ENCODE measurements at regions of chr10 and their contacts with region 1.

Region 1: DNA sequence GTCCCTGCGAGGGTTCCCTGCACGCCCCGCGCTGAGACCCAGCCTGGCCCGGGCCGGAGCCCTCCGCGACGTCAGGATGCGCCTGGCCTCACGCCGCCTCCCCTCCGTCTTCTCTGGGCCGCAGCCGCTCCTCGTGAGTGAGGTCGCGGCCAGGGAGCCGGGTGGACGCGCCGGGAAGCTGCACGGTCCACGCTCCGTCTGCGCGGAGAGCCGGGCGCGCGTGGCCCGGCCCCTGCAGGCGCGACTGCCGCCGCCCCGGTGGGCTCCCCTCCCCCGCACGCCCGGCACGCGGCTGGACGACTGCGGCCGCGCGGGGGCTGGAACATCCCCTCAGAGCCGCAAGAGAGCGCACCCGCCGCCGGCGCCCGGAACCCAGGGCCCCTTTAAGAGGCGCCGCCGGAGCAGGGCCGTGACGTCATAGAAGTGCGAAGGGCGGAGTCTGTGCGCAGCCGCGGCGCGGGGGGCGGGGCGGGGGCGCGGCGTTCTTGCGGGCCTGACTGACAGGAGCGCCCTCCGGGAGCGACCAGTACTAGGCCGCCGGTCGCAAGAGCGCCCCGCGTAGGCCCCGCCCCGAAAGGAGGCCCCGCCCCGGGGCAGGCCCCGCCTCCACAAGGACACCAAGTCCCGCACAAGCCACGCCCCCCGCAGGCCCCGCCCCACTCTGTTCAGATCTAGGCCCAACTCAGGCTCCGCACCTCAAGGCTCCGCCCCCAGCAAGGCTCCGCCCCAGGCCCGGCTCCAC is 445 bp upstream of the INPP5A start:
- DNase-seq: peak; percentile 100
- ATAC-seq: peak; percentile 89
- H3K4me3 Mint-ChIP-seq: peak overlapping the region; percentile 64
- H3K27ac Mint-ChIP-seq: no peak overlapping the region
- H3K4me1 Mint-ChIP-seq: peaks cover 52% of the 10 kb centered on the region
- H3K27me3 Mint-ChIP-seq: no peaks in the 10 kb centered on the region
- CTCF ChIP-seq: no peak

Region 2: GRCh38 chr10:132331526-132332432 is 205.4 kb before region 1 on chr10 and contains the start of gene LRRC27:
- CTCF ChIA-PET with region 1: no interaction called
- POLR2A ChIA-PET with region 1: no interaction called
- intact Hi-C with region 1: loop called (anchors 1 kb)
- DNase-seq: peak; percentile 100
- ATAC-seq: peak; percentile 80
- H3K4me3 Mint-ChIP-seq: peak within 1 kb of the TSS; percentile 94
- H3K27ac Mint-ChIP-seq: peak within 1 kb of the TSS; percentile 98
- H3K4me1 Mint-ChIP-seq: peaks cover 81% of the 10 kb centered on the region
- H3K27me3 Mint-ChIP-seq: no peaks in the 10 kb centered on the region
- CTCF ChIP-seq: no peak
- total RNA-seq, gene LRRC27: 9.1 and 15.2 TPM in 2 replicates

Region 3: GRCh38 chr10:132452631-132453469 is 84.3 kb before region 1 on chr10:
- CTCF ChIA-PET with region 1: no interaction called
- POLR2A ChIA-PET with region 1: interaction called, 3 read pairs
- intact Hi-C with region 1: loop called (anchors 2 kb)
- DNase-seq: peak; percentile 95
- ATAC-seq: peak; percentile 90
- H3K4me3 Mint-ChIP-seq: peak overlapping the region; percentile 38
- H3K27ac Mint-ChIP-seq: peak overlapping the region; percentile 77
- H3K4me1 Mint-ChIP-seq: peaks cover 24% of the 10 kb centered on the region
- H3K27me3 Mint-ChIP-seq: no peaks in the 10 kb centered on the region
- CTCF ChIP-seq: peak; percentile 66

Region 4: DNA sequence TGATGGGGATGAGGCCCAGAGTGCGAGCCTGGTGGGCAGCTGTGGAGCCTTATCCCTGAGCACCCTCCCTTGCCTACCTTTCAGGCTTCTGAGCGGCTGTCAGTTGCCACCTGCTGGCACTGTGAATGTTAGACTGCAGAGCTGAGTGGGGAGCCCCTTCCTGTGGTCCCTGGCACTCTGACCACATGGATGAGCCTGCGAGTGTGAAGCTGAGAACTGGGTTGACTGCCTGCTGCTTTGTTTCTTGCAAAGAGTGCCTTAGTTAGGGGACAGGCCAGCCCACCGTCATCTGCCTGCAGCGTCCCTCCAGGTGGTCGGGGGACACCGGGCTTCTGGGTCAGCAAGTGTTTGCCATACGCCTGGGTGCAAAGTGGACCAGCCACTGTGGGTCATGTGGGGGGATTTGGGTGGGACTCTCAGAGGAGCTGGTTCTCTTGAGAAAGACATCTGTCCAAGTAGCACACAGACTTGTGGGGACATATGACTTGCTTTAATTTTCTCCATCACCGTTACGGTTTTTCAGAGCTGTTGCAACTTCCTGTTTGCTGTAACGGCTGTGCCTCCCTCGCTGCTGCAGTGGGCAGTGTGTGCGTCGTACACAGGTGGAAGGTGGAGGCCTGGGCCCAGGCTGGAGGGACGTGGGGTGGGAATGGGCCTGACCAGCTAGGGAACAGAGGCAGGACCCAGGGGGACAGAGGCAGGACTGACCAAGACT is 14.1 kb after region 1 on chr10:
- CTCF ChIA-PET with region 1: interaction called, 11 read pairs
- POLR2A ChIA-PET with region 1: interaction called, 18 read pairs
- intact Hi-C with region 1: loop called (anchors 1 kb)
- DNase-seq: no peak
- ATAC-seq: peak; percentile 32
- H3K4me3 Mint-ChIP-seq: peak overlapping the region; percentile 72
- H3K27ac Mint-ChIP-seq: peak overlapping the region; percentile 91
- H3K4me1 Mint-ChIP-seq: peaks cover 55% of the 10 kb centered on the region
- H3K27me3 Mint-ChIP-seq: no peaks in the 10 kb centered on the region
- CTCF ChIP-seq: no peak

Region 5: DNA sequence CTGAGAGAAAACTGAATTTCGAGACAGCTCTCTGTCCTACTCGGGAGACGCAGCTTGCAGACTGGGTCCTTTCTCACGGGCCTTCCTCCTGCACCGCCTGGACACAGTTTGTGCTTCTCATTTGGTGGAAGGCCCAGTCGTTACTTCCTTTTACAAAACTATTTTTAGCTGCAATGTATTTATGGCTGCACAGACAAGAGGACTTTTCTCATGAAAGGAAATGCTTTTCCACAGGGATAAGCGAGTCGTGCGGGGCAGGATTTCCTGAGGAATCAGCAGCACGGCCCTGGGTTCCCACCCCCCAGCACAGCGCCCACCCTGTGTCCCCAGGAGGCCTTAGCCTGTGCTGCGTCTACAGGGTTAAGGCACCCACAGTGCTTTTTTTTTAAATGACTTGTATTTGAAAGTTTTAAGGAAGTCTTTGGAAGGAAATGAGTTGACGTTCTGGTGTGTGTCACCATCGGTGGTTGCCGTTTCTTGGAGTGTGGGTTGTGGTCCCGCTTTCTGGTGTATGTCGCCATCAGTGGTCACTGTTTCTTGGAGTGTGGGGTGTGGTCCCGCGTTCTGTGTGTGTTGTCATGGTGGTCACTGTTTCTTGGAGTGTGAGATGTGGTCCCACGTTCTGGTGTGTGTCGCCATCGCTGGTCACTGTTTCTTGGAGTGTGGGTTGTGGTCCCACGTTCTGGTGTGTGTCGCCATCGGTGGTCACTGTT is 51.3 kb after region 1 on chr10:
- CTCF ChIA-PET with region 1: interaction called, 4 read pairs
- POLR2A ChIA-PET with region 1: interaction called, 6 read pairs
- intact Hi-C with region 1: loop called (anchors 1 kb)
- DNase-seq: peak; percentile 39
- ATAC-seq: peak; percentile 65
- H3K4me3 Mint-ChIP-seq: peak overlapping the region; percentile 77
- H3K27ac Mint-ChIP-seq: peak overlapping the region; percentile 78
- H3K4me1 Mint-ChIP-seq: peaks cover 75% of the 10 kb centered on the region
- H3K27me3 Mint-ChIP-seq: no peaks in the 10 kb centered on the region
- CTCF ChIP-seq: no peak

Region 6: DNA sequence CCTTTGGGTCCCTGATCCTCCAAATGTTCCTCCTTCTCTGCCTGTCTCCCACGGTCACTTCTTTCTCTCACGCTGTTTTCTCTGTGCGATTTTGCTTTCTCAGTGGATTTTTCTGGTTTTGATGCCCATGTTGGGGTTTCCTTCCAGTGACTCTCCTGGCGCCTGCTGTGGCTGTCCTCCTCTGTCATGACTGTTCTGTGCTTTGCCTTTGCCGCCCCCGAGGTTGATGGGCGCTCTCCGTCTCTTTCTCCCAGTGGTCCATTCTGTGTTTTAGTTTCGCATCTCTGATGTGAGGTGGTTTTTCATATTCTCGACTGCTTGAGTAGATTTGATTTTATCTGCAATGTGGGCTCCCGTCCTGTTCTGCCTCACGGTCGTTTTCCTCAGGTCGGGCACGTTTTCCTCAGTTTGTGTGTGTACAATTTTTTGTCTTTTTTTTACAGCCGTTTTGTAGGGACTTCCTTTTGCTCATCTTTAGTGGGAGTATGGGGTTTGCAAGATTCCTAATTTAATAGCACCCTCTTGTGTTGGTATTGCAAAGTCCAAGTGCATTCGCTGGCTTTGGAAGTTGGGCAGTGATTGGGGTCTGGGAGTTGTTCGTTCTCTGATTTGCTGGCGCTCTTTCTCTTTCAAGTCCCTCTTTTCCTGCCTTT is 100.5 kb after region 1 on chr10:
- CTCF ChIA-PET with region 1: no interaction called
- POLR2A ChIA-PET with region 1: no interaction called
- intact Hi-C with region 1: loop called (anchors 1 kb)
- DNase-seq: peak; percentile 14
- ATAC-seq: peak; percentile 66
- H3K4me3 Mint-ChIP-seq: peak overlapping the region; percentile 59
- H3K27ac Mint-ChIP-seq: peak overlapping the region; percentile 1
- H3K4me1 Mint-ChIP-seq: peaks cover 36% of the 10 kb centered on the region
- H3K27me3 Mint-ChIP-seq: no peaks in the 10 kb centered on the region
- CTCF ChIP-seq: no peak

Region 7: GRCh38 chr10:132735923-132736391 is 198.8 kb after region 1 on chr10:
- CTCF ChIA-PET with region 1: no interaction called
- POLR2A ChIA-PET with region 1: no interaction called
- intact Hi-C with region 1: no loop called
- DNase-seq: no peak
- ATAC-seq: no peak
- H3K4me3 Mint-ChIP-seq: no peak overlapping the region
- H3K27ac Mint-ChIP-seq: no peak overlapping the region
- H3K4me1 Mint-ChIP-seq: no peaks in the 10 kb centered on the region
- H3K27me3 Mint-ChIP-seq: no peaks in the 10 kb centered on the region
- CTCF ChIP-seq: no peak

Measured in activated B cell treated with CpG ODN at 0.5 μM for 24 hours (primary cell).